Mammary epithelial cell (primary cell): ENCODE measurements at regions of chrX and their contacts with region 1.

Region 1: DNA sequence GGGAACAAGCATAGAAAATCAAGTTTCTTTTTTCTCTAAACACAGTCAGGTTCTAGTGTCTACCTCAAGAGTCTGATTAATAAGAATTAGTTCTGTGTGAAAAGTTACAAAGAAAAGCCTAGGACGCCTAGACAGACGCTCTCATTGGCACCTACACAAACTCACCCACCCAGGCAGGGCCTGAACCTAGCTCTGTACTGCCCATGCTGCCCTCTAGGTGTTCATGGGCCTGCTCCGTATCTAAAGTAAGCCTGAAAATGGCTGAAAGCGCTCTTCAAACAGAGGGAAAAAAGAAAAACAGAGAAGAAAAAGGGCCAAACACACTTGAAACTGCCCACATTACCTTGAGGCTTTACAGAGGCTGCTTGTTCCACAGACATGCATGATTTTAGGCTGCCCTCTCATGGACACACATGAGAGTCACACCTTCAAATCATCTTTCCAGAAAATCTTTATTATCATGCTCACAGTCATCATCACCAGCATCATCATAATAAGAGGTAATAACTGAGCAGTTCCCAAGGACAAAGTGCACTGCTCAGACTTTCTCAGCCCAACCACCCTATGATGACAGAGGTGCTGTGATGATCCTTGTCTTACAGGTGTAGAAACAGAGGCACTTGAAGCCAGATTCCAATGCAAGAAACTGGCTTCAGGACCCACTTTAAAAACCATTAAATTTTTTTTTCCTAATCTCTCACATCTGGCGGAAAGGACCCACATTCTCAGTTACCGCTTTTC is 49.6 kb downstream of the MAP7D2 start:
- DNase-seq: peak; percentile 52
- H3K4me3 ChIP-seq: no peak overlapping the region
- H3K27ac ChIP-seq: peak overlapping the region; percentile 64
- H3K4me1 ChIP-seq: peaks cover 17% of the 10 kb centered on the region
- H3K27me3 ChIP-seq: no peaks in the 10 kb centered on the region
- CTCF ChIP-seq: peak; percentile 64 to 68

Region 2: GRCh38 chrX:18390941-18391538 is 1676.1 kb before region 1 on chrX:
- CTCF ChIA-PET with region 1: no interaction called
- dilution Hi-C with region 1: no loop called
- in situ Hi-C with region 1: no loop called
- intact Hi-C with region 1: loop called (anchors 5 kb)
- DNase-seq: peak; percentile 10
- H3K4me3 ChIP-seq: no peak overlapping the region
- H3K27ac ChIP-seq: no peak overlapping the region
- H3K4me1 ChIP-seq: peaks cover 2% of the 10 kb centered on the region
- H3K27me3 ChIP-seq: no peaks in the 10 kb centered on the region
- CTCF ChIP-seq: peak; percentile 58 to 62

Region 3: DNA sequence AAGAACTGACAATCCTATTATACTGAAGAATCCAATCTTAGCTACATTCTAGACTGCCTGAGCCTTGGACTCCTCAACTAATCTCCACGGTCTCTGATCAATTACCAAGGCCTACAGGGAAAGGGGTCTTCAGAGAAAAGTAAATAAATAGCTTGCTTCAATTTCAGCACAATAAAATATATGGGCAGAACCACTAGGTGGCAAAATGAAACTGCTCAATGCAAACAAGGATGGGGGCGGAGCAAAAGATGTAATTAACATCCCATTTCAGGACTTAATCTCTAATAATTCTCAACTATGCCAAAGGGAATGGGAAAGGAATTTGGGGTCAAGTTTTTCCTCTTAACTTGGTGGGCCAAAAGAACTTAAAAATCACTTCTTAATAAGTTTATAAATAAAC is 473.4 kb before region 1 on chrX:
- CTCF ChIA-PET with region 1: no interaction called
- dilution Hi-C with region 1: no loop called
- in situ Hi-C with region 1: no loop called
- intact Hi-C with region 1: loop called (anchors 2 kb)
- DNase-seq: no peak
- H3K4me3 ChIP-seq: no peak overlapping the region
- H3K27ac ChIP-seq: no peak overlapping the region
- H3K4me1 ChIP-seq: peaks cover 3% of the 10 kb centered on the region
- H3K27me3 ChIP-seq: no peaks in the 10 kb centered on the region
- CTCF ChIP-seq: peak; percentile 45 to 55

Region 4: DNA sequence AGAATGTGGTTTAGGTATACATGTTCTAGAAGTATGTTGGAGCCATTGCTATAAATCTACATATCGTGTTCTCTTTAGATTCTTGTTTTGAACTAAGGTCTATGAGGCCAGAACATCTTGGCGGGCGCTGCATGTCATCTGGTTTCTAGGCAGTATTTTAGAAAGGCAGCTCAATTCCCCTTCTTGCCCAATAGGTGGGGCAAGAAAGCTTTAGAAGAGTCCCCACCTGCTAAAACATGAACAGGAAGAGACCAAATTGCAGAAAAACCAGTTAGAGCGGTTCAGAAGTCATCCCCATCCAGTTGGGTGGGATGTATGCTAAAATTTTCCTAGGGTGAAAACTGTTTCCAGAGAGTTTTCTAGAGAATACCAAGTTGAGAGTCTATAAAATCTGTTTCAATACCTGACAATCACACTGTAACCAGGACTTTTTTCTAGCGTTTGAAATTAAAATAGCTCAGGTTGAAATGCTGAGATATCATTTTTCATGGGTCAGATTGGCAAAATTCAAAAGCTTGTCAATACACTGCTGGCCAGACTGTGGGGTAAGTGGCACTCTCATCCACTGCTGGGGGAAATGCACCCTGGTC is 162.3 kb before region 1 on chrX:
- CTCF ChIA-PET with region 1: interaction called, 22 read pairs
- dilution Hi-C with region 1: no loop called
- in situ Hi-C with region 1: loop called in 1 of 2 experiments (anchors 25 kb)
- intact Hi-C with region 1: loop called (anchors 1 kb)
- DNase-seq: peak; percentile 54
- H3K4me3 ChIP-seq: no peak overlapping the region
- H3K27ac ChIP-seq: no peak overlapping the region
- H3K4me1 ChIP-seq: peaks cover 3% of the 10 kb centered on the region
- H3K27me3 ChIP-seq: no peaks in the 10 kb centered on the region
- CTCF ChIP-seq: peak; percentile 54 to 80

Region 5: GRCh38 chrX:19990556-19991349 is 76.4 kb before region 1 on chrX and contains the start of gene BCLAF3:
- CTCF ChIA-PET with region 1: no interaction called
- dilution Hi-C with region 1: no loop called
- in situ Hi-C with region 1: no loop called
- intact Hi-C with region 1: loop called (anchors 2 kb)
- DNase-seq: peak; percentile 79
- H3K4me3 ChIP-seq: peak within 1 kb of the TSS; percentile 55 to 72 (median 71)
- H3K27ac ChIP-seq: peak within 1 kb of the TSS; percentile 16
- H3K4me1 ChIP-seq: no peaks in the 10 kb centered on the region
- H3K27me3 ChIP-seq: no peaks in the 10 kb centered on the region
- CTCF ChIP-seq: peak; percentile 42 to 68
- total RNA-seq, gene BCLAF3: 7.5 to 11.0 TPM

Region 6: GRCh38 chrX:20116579-20117240 is 49.6 kb after region 1 on chrX and contains the start of gene MAP7D2:
- CTCF ChIA-PET with region 1: no interaction called
- dilution Hi-C with region 1: no loop called
- in situ Hi-C with region 1: no loop called
- intact Hi-C with region 1: loop called (anchors 5 kb)
- DNase-seq: no peak
- H3K4me3 ChIP-seq: peak within 1 kb of the TSS; percentile 32 to 47 (median 37)
- H3K27ac ChIP-seq: no peak within 1 kb of the TSS
- H3K4me1 ChIP-seq: peaks cover 12% of the 10 kb centered on the region
- H3K27me3 ChIP-seq: no peaks in the 10 kb centered on the region
- CTCF ChIP-seq: no peak
- total RNA-seq, gene MAP7D2: 1.0 to 5.0 TPM